Prostate gland (tissue), 2 donors: ENCODE measurements at regions of chr5 and their contacts with region 1.

Region 1: DNA sequence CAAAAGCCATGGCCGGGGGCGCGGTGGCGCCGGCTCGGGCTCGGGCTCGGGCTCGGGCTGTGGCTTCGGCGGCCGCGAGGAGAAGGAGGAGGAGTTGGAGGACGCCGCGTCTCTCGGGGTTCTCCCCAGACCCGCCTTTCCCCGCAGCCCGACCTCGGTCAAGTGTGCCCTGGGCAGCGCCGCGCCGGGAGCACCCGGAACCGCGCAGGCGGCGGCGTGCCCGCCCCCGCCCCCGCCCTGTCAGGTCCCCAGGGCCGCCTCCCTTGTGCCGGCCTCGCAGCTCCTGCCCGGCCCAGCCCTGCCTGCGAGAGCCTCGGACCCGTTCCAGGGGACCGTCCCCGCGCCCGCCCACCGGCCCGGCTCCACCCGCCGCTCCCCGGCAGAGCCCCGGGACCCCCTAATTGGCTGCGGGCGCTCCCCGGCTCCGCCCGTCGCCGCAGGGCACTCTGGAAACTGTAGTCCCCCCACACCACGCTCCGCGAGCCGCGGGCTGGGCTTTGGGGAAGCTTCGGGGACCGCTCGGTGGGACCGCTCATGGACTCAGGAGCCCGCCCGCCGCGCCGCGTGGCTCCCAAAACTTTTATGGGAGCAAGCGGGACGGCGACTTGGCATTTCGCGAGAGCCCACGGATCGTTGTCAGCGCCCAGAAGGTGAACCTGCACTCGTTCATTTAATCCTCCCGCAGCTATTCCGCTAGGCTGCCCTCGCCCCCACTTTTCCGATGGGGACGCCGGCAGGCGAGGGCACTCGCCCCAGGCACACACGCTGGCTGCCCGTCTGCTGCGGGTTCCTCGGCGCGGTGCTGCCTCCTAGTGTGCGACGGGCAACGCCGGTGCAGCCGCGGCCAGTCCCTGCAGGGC is at the start of gene STK10:
- DNase-seq: peak; percentile 87
- H3K4me3 ChIP-seq: peak within 1 kb of the TSS; percentile 70 to 86
- H3K27ac ChIP-seq: peak within 1 kb of the TSS; percentile 73 to 84
- H3K4me1 ChIP-seq: no peaks in the 10 kb centered on the region
- H3K27me3 ChIP-seq: no peaks in the 10 kb centered on the region
- CTCF ChIP-seq: peak; percentile 48 to 93 (median 79)
- POLR2A ChIP-seq: peak; percentile 61
- total RNA-seq, gene STK10: 4.6 to 73.3 TPM

Region 2: GRCh38 chr5:171633816-171634470 is 554.3 kb before region 1 on chr5:
- intact Hi-C with region 1: no loop called
- DNase-seq: no peak
- H3K4me3 ChIP-seq: no peak overlapping the region
- H3K27ac ChIP-seq: no peak overlapping the region
- H3K4me1 ChIP-seq: no peaks in the 10 kb centered on the region
- H3K27me3 ChIP-seq: no peaks in the 10 kb centered on the region
- CTCF ChIP-seq: no peak
- POLR2A ChIP-seq: no peak

Region 3: GRCh38 chr5:172006321-172007174 is 181.7 kb before region 1 on chr5 and contains the start of gene FBXW11:
- intact Hi-C with region 1: loop called (anchors 5 kb)
- DNase-seq: peak; percentile 97
- H3K4me3 ChIP-seq: peak within 1 kb of the TSS; percentile 94 to 96
- H3K27ac ChIP-seq: peak within 1 kb of the TSS; percentile 97 to 98
- H3K4me1 ChIP-seq: peaks cover 16% of the 10 kb centered on the region
- H3K27me3 ChIP-seq: no peaks in the 10 kb centered on the region
- CTCF ChIP-seq: peak in 1 of 4 experiments; percentile 22
- POLR2A ChIP-seq: peak; percentile 82
- total RNA-seq, gene FBXW11: 54.7 to 61.4 TPM

Region 4: DNA sequence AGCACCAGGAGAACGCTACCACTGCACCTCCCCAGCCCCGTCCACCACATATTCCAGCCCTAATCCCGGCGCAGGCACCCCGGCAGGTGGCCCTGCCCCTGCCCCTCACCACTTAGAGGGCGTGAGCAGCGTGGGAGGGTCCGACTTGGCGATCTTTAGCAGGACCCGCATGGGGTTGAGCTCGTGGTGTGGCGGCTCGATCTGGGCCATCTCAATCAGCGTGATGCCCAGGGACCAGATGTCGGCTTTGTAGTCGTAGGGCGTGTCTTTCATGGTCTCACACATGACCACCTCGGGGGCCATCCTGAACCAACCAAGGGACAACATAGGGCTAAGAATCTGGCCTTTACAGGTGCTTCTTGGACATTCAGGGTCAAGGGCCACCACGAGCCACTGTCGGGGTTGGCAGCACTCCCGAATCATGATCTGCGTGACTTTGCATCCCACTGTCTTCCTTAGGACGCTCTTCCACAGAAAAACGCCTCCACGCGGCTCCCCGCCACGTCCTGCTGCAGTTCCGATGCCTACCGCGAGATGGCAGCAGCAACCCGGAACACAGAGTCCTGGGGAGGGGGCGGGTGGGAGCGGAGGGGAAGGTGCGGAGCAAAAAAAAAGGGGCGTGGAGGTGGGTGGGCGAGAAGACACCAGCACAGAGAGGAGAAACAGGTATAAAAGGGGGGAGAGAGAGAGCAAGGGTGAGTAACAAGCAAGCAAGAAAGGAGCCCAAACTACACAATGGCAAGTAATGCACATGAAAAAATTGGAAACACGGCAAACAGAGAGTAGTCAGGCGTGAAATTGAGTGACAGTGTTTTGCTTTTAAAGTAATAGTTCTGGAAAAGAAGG is 81.5 kb before region 1 on chr5:
- intact Hi-C with region 1: loop called (anchors 1 kb)
- DNase-seq: peak; percentile 39
- H3K4me3 ChIP-seq: peak overlapping the region; percentile 8 to 19
- H3K27ac ChIP-seq: no peak overlapping the region
- H3K4me1 ChIP-seq: peaks cover 7% of the 10 kb centered on the region
- H3K27me3 ChIP-seq: no peaks in the 10 kb centered on the region
- CTCF ChIP-seq: peak; percentile 76 to 98 (median 89)
- POLR2A ChIP-seq: no peak

Region 5: DNA sequence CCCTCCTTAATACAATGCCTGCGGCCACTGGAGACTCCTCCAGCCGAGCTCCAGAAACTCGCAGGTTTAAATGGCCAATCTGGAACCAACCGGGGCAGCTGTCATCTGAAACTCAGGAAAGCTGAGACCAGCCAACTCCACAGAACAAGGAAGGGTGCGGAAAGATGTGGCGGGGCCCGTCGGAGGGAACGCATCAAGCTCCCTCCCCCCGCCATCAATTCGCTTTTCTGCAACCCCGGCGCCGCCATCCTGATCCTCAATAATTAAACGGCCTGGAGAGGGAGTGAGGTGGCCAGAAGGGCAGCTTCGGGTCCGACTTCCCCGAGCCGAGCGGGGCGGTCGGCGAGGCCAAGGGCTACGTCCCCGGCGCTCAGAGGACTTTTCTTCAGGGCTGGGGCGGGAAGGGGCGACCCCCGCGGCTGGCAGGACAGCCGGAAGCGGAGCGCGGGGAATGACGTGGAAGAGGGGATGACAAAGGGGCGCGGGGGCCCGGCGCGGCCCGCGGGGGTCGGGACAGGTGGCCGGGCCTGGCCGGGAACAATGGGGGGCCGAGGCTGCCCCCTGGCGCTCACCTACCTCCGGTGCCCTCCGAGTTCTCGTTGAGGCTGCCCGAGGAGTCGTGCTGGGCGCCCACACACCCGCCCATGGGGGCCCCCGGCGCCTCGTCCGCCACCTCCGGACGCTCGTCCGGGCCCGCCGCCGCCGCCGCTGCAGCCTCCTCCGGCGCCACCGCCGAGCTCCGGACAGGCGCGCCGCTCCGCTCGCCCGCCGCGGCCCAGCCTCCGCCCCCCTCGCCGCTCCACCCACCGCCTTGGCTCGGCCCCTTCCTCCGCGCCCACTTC is 95.0 kb after region 1 on chr5 and contains the start of gene UBTD2:
- intact Hi-C with region 1: loop called (anchors 5 kb)
- DNase-seq: peak; percentile 78
- H3K4me3 ChIP-seq: peak within 1 kb of the TSS; percentile 82 to 97
- H3K27ac ChIP-seq: peak within 1 kb of the TSS; percentile 93
- H3K4me1 ChIP-seq: peaks cover 4% of the 10 kb centered on the region
- H3K27me3 ChIP-seq: no peaks in the 10 kb centered on the region
- CTCF ChIP-seq: peak; percentile 31 to 63 (median 44)
- POLR2A ChIP-seq: peak; percentile 27
- total RNA-seq, gene UBTD2: 14.3 to 28.2 TPM